PC-9 (cell line): ENCODE measurements at regions of chr20 and their contacts with region 1.

Region 1: DNA sequence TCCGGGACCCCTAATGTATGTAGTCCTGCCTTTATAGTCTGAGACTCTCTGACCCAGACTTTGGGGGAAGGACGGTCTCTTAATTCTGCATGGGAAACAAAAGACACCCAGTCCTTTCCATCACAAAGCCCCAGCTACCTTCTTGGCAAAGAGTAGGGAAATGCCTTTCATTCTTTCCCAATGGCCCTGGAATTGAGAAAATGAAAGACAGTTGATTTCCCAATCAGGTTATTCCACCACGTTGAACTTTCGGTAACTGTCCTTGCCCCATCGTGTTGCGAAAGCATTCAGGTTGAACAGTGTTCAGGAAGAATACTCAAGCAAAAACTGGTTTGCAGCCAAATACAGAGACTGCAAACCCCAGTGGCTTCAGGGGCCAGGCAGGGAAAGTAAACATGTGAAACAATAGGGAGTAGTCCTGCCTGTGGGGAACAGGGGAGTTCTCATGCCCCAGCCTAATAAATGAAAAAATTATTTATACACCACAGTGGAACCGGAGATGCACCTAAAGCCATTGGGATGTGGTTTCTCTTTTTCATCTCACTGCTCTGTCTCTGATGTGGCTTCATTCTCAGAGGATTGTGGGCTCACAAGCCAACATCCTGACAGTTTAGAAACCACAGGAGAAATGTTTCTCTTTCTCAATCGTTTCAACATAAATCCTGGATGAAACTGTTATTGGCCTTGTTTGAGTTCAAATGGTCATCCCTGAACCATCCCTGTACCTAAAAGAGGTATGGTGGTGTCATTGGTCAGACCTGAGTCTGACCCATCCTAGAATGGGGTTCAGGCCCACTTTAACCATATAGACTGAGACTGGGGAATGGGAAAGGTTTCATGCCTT is 44.2 kb upstream of the SLC9A8 start:
- DNase-seq: peak; percentile 91 to 100
- H3K4me3 ChIP-seq: no peak overlapping the region
- H3K27ac ChIP-seq: peak overlapping the region; percentile 96
- H3K4me1 ChIP-seq: peaks cover 93% of the 10 kb centered on the region
- H3K27me3 ChIP-seq: no peaks in the 10 kb centered on the region
- CTCF ChIP-seq: no peak

Region 2: GRCh38 chr20:49549811-49550551 is 218.4 kb before region 1 on chr20:
- CTCF ChIA-PET with region 1: no interaction called
- POLR2A ChIA-PET with region 1: no interaction called
- intact Hi-C with region 1: loop called (anchors 5 kb)
- DNase-seq: no peak
- H3K4me3 ChIP-seq: no peak overlapping the region
- H3K27ac ChIP-seq: peak overlapping the region; percentile 92
- H3K4me1 ChIP-seq: peaks cover 54% of the 10 kb centered on the region
- H3K27me3 ChIP-seq: no peaks in the 10 kb centered on the region
- CTCF ChIP-seq: no peak

Region 3: GRCh38 chr20:49713753-49714712 is 54.4 kb before region 1 on chr20 and contains the start of gene B4GALT5:
- CTCF ChIA-PET with region 1: interaction called, 10 read pairs
- POLR2A ChIA-PET with region 1: interaction called, 4 read pairs
- intact Hi-C with region 1: loop called (anchors 1 kb)
- DNase-seq: peak in 1 of 2 experiments; percentile 80
- H3K4me3 ChIP-seq: peak within 1 kb of the TSS; percentile 86
- H3K27ac ChIP-seq: peak within 1 kb of the TSS; percentile 84
- H3K4me1 ChIP-seq: peaks cover 62% of the 10 kb centered on the region
- H3K27me3 ChIP-seq: no peaks in the 10 kb centered on the region
- CTCF ChIP-seq: no peak
- total RNA-seq, gene B4GALT5: 61.7 and 63.1 TPM in 2 replicates

Region 4: DNA sequence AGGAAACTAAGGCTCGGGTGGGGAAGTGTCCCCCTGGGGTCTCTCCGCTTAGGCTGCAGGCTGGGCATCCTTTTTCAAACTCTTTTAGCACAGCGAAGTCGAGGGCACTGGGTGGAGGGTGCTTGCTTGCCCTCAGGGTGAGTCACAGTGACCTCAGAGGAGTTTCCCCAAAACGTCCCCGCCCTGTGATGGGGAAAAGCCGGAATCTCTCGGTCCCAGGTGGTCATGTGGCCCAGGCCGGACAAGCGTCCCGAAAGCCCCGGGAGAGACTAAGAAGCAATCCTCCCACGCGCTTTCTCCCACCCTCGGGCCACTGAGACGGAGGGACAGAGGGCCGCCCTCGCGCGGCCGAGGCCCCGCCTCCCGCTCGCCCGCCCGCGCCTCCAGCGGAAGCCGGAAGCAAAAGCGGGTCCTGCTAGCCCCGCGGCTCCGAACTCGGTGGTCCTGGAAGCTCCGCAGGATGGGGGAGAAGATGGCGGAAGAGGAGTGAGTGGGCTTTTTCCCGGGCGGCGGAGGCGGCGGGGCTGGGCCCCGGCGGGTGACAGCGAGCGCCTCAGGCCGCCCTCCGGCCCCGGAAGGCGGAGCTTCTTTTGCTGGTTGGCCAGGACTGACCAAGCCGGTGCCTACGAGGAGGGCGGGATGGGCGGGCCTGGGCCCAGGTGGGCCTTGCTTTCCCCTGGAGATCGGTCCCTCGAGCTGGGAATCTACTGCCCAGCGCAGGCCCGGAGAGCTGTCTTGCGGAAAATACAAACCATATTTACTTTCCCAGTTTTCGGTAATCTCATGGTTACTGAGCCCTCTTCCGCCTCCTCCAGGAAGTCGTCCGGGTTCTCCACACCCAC is 44.3 kb after region 1 on chr20 and contains the start of gene SLC9A8:
- CTCF ChIA-PET with region 1: no interaction called
- POLR2A ChIA-PET with region 1: no interaction called
- intact Hi-C with region 1: loop called (anchors 1 kb)
- DNase-seq: peak; percentile 94 to 97
- H3K4me3 ChIP-seq: peak within 1 kb of the TSS; percentile 87
- H3K27ac ChIP-seq: peak within 1 kb of the TSS; percentile 98
- H3K4me1 ChIP-seq: peaks cover 70% of the 10 kb centered on the region
- H3K27me3 ChIP-seq: no peaks in the 10 kb centered on the region
- CTCF ChIP-seq: no peak
- total RNA-seq, gene SLC9A8: 12.7 and 21.4 TPM in 2 replicates

Region 5: GRCh38 chr20:49888345-49888966 is 120.0 kb after region 1 on chr20:
- CTCF ChIA-PET with region 1: no interaction called
- POLR2A ChIA-PET with region 1: no interaction called
- intact Hi-C with region 1: loop called (anchors 5 kb)
- DNase-seq: peak; percentile 79 to 89
- H3K4me3 ChIP-seq: no peak overlapping the region
- H3K27ac ChIP-seq: peak overlapping the region; percentile 49
- H3K4me1 ChIP-seq: peaks cover 44% of the 10 kb centered on the region
- H3K27me3 ChIP-seq: no peaks in the 10 kb centered on the region
- CTCF ChIP-seq: peak; percentile 99